Spleen (tissue), 13 donors: ENCODE measurements at regions of chr18 and their contacts with region 1.

Region 1: DNA sequence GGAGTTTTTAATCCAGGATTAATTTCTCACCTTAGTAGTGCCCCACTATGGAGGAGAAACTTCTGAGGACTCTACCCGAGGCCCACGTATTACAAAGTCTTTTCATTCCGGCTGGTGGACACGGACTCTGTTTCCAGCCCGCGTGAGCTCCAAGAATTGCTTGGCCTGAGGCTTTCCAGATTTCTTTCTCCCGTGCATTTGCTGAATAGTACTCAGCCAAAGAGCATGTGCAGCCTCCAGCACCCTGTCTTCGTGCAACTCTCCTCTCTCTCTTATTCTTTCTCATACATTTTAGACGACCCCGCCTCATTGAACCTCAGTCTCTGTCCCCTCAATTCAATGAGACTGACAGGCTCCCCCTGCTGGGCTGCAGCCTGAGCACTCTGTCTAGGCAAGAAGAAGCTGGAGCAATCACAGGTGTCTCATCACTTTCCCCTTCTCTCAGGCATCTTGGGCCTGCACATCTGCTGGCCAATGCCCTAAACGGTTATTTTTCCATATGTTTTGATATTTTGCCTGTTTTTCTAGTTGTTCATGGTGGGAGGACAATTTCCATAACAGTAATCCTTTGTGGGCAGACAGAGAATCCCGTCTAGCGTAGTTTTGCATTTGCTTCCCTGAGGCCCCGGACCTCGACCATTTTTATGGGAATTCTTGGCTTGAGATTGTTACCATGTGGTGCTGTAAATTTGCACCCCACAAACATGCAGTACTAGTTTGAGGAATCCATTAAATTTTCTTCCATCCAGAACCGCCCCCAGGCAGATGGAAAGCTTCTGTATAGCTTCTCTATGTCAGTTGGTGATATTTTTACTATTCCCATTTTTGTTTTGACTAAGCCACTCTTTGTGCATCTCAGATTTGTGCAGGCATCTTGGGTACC is 50.1 kb upstream of the LPIN2 start:
- DNase-seq: peak; percentile 89
- H3K4me3 ChIP-seq: peak overlapping the region in 1 of 8 donors; percentile 38
- H3K27ac ChIP-seq: peak overlapping the region in 6 of 8 donors; percentile 75 to 89 (median 86)
- H3K4me1 ChIP-seq: peaks cover 25 to 76% (median 53%) of the 10 kb centered on the region in 6 donors
- H3K27me3 ChIP-seq: peaks cover 0 to 4% (median 0%) of the 10 kb centered on the region in 7 donors
- CTCF ChIP-seq: peak; percentile 38 to 83 (median 70)
- POLR2A ChIP-seq: no peak

Region 2: DNA sequence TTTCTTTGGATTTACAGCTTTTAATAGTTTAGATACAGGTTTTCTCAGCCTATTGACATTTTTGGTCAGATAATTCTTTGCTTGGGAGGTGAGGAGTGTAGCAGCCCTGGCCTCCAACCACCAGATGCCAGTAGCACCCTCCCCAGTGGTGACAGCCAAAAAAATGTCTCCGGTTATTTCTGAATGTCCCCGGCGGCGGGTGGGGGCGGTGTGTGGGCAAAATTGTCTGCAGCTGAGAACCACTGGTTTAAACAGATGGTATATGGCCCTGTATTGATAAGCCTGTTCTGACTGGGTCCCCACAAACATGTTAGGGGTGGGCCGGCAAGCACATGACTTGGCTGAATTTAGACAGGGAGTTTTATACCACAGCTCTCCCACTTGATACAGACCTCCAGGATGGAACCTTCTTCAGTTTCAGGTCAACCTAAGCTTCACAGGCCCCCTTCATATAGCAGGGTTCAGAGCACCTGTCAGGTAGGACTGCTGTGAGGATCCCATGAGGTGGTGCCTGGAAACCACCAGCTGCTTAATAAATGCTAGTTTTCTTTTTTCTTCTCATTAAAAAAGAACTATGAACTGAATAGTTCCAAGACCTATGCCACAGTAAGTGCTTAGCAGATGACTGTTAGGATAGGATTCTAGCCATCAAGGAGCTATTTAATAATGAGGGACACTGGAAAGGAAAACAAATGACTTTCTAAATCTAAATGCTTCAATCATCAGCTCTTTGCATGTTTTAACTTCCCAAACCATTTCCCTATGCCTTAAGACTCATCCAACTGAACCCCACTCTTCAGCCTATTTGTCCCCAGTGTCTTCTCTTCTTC is 68.2 kb before region 1 on chr18:
- intact Hi-C with region 1: loop called (anchors 5 kb)
- DNase-seq: peak; percentile 88
- H3K4me3 ChIP-seq: peak overlapping the region in 1 of 8 donors; percentile 34
- H3K27ac ChIP-seq: peak overlapping the region in 5 of 8 donors; percentile 1 to 67 (median 43)
- H3K4me1 ChIP-seq: peaks cover 19 to 79% (median 49%) of the 10 kb centered on the region in 6 donors
- H3K27me3 ChIP-seq: no peaks in the 10 kb centered on the region
- CTCF ChIP-seq: peak in 10 of 11 experiments; percentile 36 to 75 (median 60)
- POLR2A ChIP-seq: no peak

Region 3: DNA sequence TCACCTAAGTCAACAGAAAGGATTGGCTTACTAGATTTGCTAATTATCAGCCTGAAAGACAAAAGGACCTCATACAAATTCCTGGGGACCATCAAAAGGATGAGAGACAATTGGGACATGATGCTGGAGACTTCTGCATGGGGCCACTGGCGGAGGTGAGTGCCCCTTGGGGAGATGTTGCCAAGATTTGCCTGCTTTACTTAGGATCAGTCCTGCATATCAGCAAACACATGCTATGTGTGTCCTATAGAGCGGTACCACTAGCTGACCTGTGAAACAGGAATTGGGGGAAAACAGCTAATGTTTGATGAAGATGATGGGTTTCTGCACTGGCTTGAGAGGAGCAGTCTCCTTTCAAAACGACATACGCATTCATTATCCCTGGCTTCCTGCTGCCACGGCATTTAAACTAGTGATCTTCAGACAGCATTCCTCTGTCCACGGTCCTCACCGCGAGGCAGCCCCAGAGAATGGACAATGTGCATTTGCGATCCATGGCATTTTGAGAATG is 491.1 kb after region 1 on chr18:
- intact Hi-C with region 1: no loop called
- DNase-seq: no peak
- H3K4me3 ChIP-seq: no peak overlapping the region
- H3K27ac ChIP-seq: no peak overlapping the region
- H3K4me1 ChIP-seq: no peaks in the 10 kb centered on the region
- H3K27me3 ChIP-seq: no peaks in the 10 kb centered on the region
- CTCF ChIP-seq: no peak
- POLR2A ChIP-seq: no peak